Activated CD8-positive, alpha-beta T cell treated with anti-CD3 and anti-CD28 coated beads for 36 hours (primary cell): ENCODE measurements at regions of chr20 and their contacts with region 1.

Region 1: GRCh38 chr20:51595058-51595532 is 52.6 kb upstream of the NFATC2 start:
- DNase-seq: peak; percentile 91
- ATAC-seq: peak; percentile 94
- H3K4me3 Mint-ChIP-seq: peak overlapping the region; percentile 40
- H3K27ac Mint-ChIP-seq: peak overlapping the region; percentile 86
- H3K4me1 Mint-ChIP-seq: peaks cover 53% of the 10 kb centered on the region
- H3K27me3 Mint-ChIP-seq: peaks cover 6% of the 10 kb centered on the region
- CTCF ChIP-seq: peak; percentile 94

Region 2: GRCh38 chr20:51287592-51288378 is 307.3 kb before region 1 on chr20:
- CTCF ChIA-PET with region 1: no interaction called
- POLR2A ChIA-PET with region 1: no interaction called
- intact Hi-C with region 1: no loop called
- DNase-seq: no peak
- ATAC-seq: no peak
- H3K4me3 Mint-ChIP-seq: no peak overlapping the region
- H3K27ac Mint-ChIP-seq: no peak overlapping the region
- H3K4me1 Mint-ChIP-seq: no peaks in the 10 kb centered on the region
- H3K27me3 Mint-ChIP-seq: no peaks in the 10 kb centered on the region
- CTCF ChIP-seq: no peak

Region 3: DNA sequence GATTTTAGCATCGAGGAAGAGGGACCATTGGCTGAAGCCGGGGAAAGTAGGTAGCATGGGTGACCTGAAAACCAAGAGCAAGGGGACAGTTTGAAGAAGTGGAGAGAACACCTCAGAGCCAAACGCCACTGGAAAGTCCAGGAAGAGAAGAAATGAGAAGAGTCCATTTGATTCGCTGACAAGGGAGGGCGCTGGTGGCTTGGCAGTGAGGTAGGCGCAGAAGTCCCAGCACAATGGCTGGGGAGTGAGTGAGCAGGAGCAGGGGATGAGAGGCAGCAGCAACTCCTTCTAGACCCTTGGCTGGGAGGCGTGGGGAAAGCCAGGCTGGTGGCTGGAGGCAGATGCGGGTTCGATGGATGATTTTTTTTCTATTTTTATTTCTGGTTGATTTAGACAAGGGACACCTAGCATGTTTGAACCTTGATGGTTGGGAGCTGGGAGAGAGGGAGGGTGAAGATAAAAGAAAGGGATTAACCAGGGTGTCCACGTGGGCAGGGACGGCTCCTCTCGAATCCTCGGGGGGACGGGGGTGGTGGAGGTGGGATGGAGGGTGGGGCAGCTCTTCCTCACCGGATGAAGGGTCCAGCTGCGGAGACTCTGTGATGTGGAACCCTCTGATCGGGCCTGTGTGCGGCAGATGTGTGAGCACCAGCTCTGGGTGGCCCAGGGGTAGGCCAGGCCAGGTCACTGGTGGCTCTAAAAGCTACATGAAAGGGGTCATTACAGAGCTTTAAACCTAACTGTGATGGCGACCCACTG is 216.7 kb before region 1 on chr20:
- CTCF ChIA-PET with region 1: interaction called, 47 read pairs
- POLR2A ChIA-PET with region 1: no interaction called
- intact Hi-C with region 1: loop called (anchors 2 kb)
- DNase-seq: peak; percentile 30
- ATAC-seq: peak; percentile 42
- H3K4me3 Mint-ChIP-seq: no peak overlapping the region
- H3K27ac Mint-ChIP-seq: peak overlapping the region; percentile 16
- H3K4me1 Mint-ChIP-seq: no peaks in the 10 kb centered on the region
- H3K27me3 Mint-ChIP-seq: no peaks in the 10 kb centered on the region
- CTCF ChIP-seq: peak; percentile 25

Region 4: GRCh38 chr20:51500311-51500710 is 94.8 kb before region 1 on chr20:
- CTCF ChIA-PET with region 1: interaction called, 11 read pairs
- POLR2A ChIA-PET with region 1: interaction called, 5 read pairs
- intact Hi-C with region 1: no loop called
- DNase-seq: peak; percentile 79
- ATAC-seq: peak; percentile 82
- H3K4me3 Mint-ChIP-seq: no peak overlapping the region
- H3K27ac Mint-ChIP-seq: peak overlapping the region; percentile 92
- H3K4me1 Mint-ChIP-seq: peaks cover 82% of the 10 kb centered on the region
- H3K27me3 Mint-ChIP-seq: no peaks in the 10 kb centered on the region
- CTCF ChIP-seq: no peak

Region 5: GRCh38 chr20:51512645-51513044 is 82.5 kb before region 1 on chr20:
- CTCF ChIA-PET with region 1: interaction called, 14 read pairs
- POLR2A ChIA-PET with region 1: interaction called, 9 read pairs
- intact Hi-C with region 1: no loop called
- DNase-seq: no peak
- ATAC-seq: peak; percentile 84
- H3K4me3 Mint-ChIP-seq: no peak overlapping the region
- H3K27ac Mint-ChIP-seq: peak overlapping the region; percentile 84
- H3K4me1 Mint-ChIP-seq: peaks cover 73% of the 10 kb centered on the region
- H3K27me3 Mint-ChIP-seq: no peaks in the 10 kb centered on the region
- CTCF ChIP-seq: no peak

Region 6: DNA sequence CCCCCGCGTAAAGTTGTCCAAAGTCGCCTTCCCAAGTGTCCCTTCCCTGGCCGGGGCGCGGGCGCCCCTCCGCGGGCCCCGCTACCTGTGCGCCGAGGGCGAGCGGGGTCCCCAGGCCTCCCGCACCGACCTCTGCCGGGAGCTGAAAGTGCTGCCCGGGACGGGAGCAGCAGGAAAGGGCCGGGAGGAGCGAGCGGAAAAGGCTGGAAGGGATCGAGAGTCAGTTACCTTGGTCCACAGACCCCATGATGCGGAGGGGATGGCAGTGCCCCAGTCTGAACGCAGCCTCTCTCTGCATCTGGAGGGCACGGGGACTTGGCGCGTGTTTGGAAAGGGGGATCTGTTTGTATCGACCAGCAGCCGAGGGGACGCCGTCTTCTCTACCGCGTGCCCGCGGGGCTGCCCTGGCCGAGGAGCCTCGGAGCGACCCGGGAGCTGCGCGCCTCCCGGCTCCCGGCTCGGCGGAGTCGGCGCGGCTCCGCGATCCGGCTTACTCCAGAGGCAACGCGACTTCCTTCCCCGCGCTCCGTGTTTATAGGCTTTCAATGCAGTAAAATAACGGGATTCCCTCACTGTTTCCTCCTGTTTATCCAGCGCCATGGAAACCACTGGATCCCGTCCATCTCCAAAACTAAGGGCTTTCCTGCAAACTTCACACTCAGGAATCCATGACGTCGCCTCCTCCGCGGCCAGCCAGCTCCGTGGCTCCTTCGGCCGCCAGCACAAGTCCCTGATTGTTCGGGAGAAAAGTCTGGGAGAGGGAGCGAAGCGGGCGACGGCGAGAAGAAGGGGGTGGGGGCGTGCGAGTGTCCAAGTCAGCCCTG is 32.6 kb before region 1 on chr20:
- CTCF ChIA-PET with region 1: interaction called, 24 read pairs
- POLR2A ChIA-PET with region 1: no interaction called
- intact Hi-C with region 1: no loop called
- DNase-seq: peak; percentile 22
- ATAC-seq: peak; percentile 21
- H3K4me3 Mint-ChIP-seq: peak overlapping the region; percentile 62
- H3K27ac Mint-ChIP-seq: no peak overlapping the region
- H3K4me1 Mint-ChIP-seq: peaks cover 33% of the 10 kb centered on the region
- H3K27me3 Mint-ChIP-seq: peaks cover 51% of the 10 kb centered on the region
- CTCF ChIP-seq: no peak

Region 7: GRCh38 chr20:51624157-51624731 is 29.1 kb after region 1 on chr20:
- CTCF ChIA-PET with region 1: interaction called, 23 read pairs
- POLR2A ChIA-PET with region 1: no interaction called
- intact Hi-C with region 1: no loop called
- DNase-seq: peak; percentile 80
- ATAC-seq: peak; percentile 86
- H3K4me3 Mint-ChIP-seq: no peak overlapping the region
- H3K27ac Mint-ChIP-seq: peak overlapping the region; percentile 46
- H3K4me1 Mint-ChIP-seq: peaks cover 10% of the 10 kb centered on the region
- H3K27me3 Mint-ChIP-seq: no peaks in the 10 kb centered on the region
- CTCF ChIP-seq: peak; percentile 87